K562 (cell line): ENCODE measurements at regions of chr15 and their contacts with region 1.

Region 1: DNA sequence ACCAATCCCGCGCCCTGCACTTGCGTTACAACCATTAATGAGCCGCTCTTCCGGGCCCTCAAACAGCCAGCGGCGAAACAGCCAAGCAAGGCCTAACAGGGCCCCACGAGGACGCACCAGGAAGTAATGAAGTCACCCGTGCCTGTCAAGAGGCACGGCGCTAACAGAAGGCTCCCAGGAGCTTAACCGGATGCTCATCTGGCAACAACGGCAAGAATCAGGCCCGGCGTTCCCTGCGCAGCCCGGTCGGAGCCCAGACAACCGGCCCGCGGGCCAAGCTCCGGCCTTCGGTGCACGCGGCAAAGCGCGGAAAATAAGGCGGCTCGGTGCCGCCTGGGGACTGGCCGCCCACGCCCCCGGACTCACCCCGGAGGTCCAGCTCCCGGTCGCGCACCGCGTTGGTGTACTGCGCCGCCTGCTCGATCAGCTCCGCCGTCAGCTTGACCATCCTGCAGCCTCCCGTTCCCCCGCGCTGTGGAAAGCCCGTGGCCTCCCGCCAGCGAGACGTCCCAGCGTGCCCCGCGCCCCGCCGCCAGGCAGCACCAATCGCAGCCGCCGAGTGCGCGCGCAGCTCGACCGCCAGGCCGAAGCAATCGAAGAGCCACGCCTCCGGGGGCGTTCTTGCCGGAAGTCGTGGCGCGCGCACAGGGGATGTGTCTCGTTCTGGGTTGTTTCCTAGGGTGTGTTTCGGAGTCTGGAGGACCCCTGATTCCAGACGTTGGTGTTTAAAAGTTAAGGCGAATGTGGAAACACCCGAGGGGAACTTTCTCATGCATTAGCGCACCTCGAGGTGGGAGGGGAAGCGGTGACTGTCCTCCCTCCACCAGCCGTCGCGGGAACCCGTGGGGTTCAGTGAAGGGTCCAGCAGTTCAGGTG is at the start of gene SNRPA1:
- DNase-seq: peak; percentile 94 to 97 (median 96)
- ATAC-seq: peak; percentile 91
- H3K4me3 ChIP-seq: peak within 1 kb of the TSS; percentile 96
- H3K27ac ChIP-seq: peak within 1 kb of the TSS; percentile 92
- H3K4me1 ChIP-seq: peaks cover 7 to 9% of the 10 kb centered on the region in 2 experiments; a peak in 2 of 5 replicates
- H3K27me3 ChIP-seq: no peaks in the 10 kb centered on the region
- CTCF ChIP-seq: no peak
- EP300 ChIP-seq: peak; percentile 41; the same call in 1 of the 2 replicates
- POLR2A ChIP-seq: peak; percentile 89
- RAD21 ChIP-seq: no peak
- polyA plus RNA-seq, gene SNRPA1: 212 to 214 TPM

Region 2: DNA sequence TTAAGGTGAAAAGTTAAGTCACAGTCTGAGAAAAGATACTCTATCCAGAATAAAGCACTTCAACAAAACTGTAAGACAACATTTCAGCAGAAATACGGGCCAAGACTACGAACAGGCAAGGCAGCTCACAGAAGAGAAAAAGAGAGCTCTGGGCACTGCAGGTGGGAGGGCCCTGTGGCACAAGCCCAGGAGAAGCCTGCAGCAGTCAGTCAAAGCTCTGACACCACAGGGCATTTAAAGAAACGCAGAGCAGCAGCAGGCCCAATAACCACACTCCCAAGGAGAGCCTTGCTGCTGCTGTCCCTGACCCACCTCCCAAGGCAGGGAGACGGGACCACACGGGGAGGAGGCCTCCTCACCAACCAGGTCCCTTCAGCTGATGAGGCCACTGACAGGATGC is 62.3 kb before region 1 on chr15:
- CTCF ChIA-PET with region 1: no interaction called
- POLR2A ChIA-PET with region 1: no interaction called
- in situ Hi-C with region 1: no loop called
- intact Hi-C with region 1: no loop called
- DNase-seq: no peak
- ATAC-seq: no peak
- H3K4me3 ChIP-seq: no peak overlapping the region
- H3K27ac ChIP-seq: no peak overlapping the region
- H3K4me1 ChIP-seq: no peaks in the 10 kb centered on the region; a peak in 1 of 5 replicates
- H3K27me3 ChIP-seq: no peaks in the 10 kb centered on the region
- CTCF ChIP-seq: no peak
- EP300 ChIP-seq: no peak
- POLR2A ChIP-seq: no peak
- RAD21 ChIP-seq: no peak

Region 3: GRCh38 chr15:101283931-101284330 is 11.0 kb before region 1 on chr15:
- CTCF ChIA-PET with region 1: no interaction called
- POLR2A ChIA-PET with region 1: interaction called, 25 read pairs
- in situ Hi-C with region 1: no loop called
- intact Hi-C with region 1: no loop called
- DNase-seq: no peak
- ATAC-seq: no peak
- H3K4me3 ChIP-seq: no peak overlapping the region
- H3K27ac ChIP-seq: no peak overlapping the region
- H3K4me1 ChIP-seq: no peaks in the 10 kb centered on the region
- H3K27me3 ChIP-seq: no peaks in the 10 kb centered on the region
- CTCF ChIP-seq: no peak
- EP300 ChIP-seq: no peak
- POLR2A ChIP-seq: no peak
- RAD21 ChIP-seq: no peak

Region 4: GRCh38 chr15:101307048-101307896 is 12.3 kb after region 1 on chr15:
- CTCF ChIA-PET with region 1: no interaction called
- POLR2A ChIA-PET with region 1: interaction called, 13 read pairs
- in situ Hi-C with region 1: no loop called
- intact Hi-C with region 1: no loop called
- DNase-seq: no peak
- ATAC-seq: peak; percentile 12; the same call in 2 of the 3 replicates
- H3K4me3 ChIP-seq: no peak overlapping the region
- H3K27ac ChIP-seq: no peak overlapping the region
- H3K4me1 ChIP-seq: no peaks in the 10 kb centered on the region; a peak in 1 of 5 replicates
- H3K27me3 ChIP-seq: peaks cover 0 to 48% of the 10 kb centered on the region in 2 experiments; a peak in 4 of 5 replicates
- CTCF ChIP-seq: no peak
- EP300 ChIP-seq: no peak
- POLR2A ChIP-seq: no peak
- RAD21 ChIP-seq: no peak

Region 5: DNA sequence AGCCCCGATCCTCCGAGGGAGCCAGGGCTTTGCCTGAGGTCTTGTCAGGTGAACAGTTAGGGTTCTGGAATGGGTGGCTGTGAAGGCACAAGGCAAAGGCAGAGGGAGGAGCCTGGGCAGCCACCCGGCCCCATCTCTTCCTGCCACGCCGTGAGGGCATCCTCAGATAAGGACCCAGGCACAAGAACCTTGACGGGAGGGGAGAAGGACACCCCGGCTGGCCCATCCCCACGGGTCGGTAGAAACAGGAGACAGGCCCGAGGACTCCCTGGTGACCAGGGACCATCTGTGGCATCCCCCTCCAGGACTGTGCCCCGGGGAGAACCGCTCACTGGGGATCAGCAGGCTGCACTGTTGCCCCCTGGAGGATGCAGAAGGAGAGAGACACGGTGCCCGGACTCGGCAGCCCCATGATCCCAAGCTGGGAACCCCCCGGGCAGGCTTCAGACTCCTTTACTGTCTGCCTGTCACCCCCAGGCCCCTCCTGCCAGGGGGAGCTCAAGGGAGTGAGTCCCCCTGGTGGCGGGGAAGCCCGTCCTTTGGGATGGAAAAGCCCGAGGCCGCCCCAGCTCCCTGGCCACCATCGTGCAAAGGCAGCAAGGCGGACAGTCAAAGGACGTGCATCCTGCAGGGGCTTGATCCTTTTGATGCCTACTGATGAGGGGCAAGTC is 206.9 kb after region 1 on chr15:
- CTCF ChIA-PET with region 1: interaction called, 7 read pairs
- POLR2A ChIA-PET with region 1: interaction called, 4 read pairs
- in situ Hi-C with region 1: loop called (anchors 10 kb)
- intact Hi-C with region 1: loop called (anchors 2 kb)
- DNase-seq: peak; percentile 51 to 67 (median 54)
- ATAC-seq: peak; percentile 87
- H3K4me3 ChIP-seq: no peak overlapping the region
- H3K27ac ChIP-seq: no peak overlapping the region; the same call in 2 of the 3 replicates
- H3K4me1 ChIP-seq: peaks cover 18 to 26% of the 10 kb centered on the region in 2 experiments; a peak in 4 of 5 replicates
- H3K27me3 ChIP-seq: peaks cover 4 to 47% of the 10 kb centered on the region in 2 experiments; a peak in 4 of 5 replicates
- CTCF ChIP-seq: peak; percentile 52 to 69 (median 62)
- EP300 ChIP-seq: no peak
- POLR2A ChIP-seq: no peak
- RAD21 ChIP-seq: peak; percentile 22 to 61; a peak in 3 of 4 replicates

Region 6: GRCh38 chr15:101600035-101600434 is 305.1 kb after region 1 on chr15:
- CTCF ChIA-PET with region 1: no interaction called
- POLR2A ChIA-PET with region 1: no interaction called
- in situ Hi-C with region 1: no loop called
- intact Hi-C with region 1: no loop called
- DNase-seq: no peak
- ATAC-seq: peak; percentile 66
- H3K4me3 ChIP-seq: no peak overlapping the region
- H3K27ac ChIP-seq: no peak overlapping the region
- H3K4me1 ChIP-seq: no peaks in the 10 kb centered on the region
- H3K27me3 ChIP-seq: peaks cover 7 to 11% of the 10 kb centered on the region in 2 experiments
- CTCF ChIP-seq: no peak
- EP300 ChIP-seq: no peak
- POLR2A ChIP-seq: no peak
- RAD21 ChIP-seq: no peak

Region 7: GRCh38 chr15:101652098-101652782 is 357.3 kb after region 1 on chr15 and contains the start of gene TM2D3:
- CTCF ChIA-PET with region 1: no interaction called
- POLR2A ChIA-PET with region 1: interaction called, 6 read pairs
- in situ Hi-C with region 1: loop called (anchors 5 kb)
- intact Hi-C with region 1: no loop called
- DNase-seq: peak; percentile 96
- ATAC-seq: peak; percentile 93
- H3K4me3 ChIP-seq: peak within 1 kb of the TSS; percentile 81
- H3K27ac ChIP-seq: peak within 1 kb of the TSS; percentile 90
- H3K4me1 ChIP-seq: peaks cover 14 to 17% of the 10 kb centered on the region in 2 experiments; a peak in 4 of 5 replicates
- H3K27me3 ChIP-seq: no peaks in the 10 kb centered on the region
- CTCF ChIP-seq: peak; percentile 63 to 72 (median 64)
- EP300 ChIP-seq: no peak; the same call in 1 of the 2 replicates
- POLR2A ChIP-seq: peak; percentile 90
- RAD21 ChIP-seq: peak; percentile 30 to 52
- polyA plus RNA-seq, gene TM2D3: 59.2 to 67.9 TPM